Heart right ventricle (tissue), 16 donors: ENCODE measurements at regions of chr1 and their contacts with region 1.

Region 1: GRCh38 chr1:99326215-99326949 is 62.1 kb downstream of the PLPPR4 start:
- DNase-seq: no peak
- ATAC-seq: no peak
- H3K4me3 ChIP-seq: no peak overlapping the region
- H3K27ac ChIP-seq: no peak overlapping the region
- H3K4me1 ChIP-seq: peaks cover 0 to 4% (median 0%) of the 10 kb centered on the region in 9 donors
- H3K27me3 ChIP-seq: no peaks in the 10 kb centered on the region
- CTCF ChIP-seq: peak in 7 of 9 donors; percentile 31 to 53 (median 34)

Region 2: GRCh38 chr1:99277066-99277465 is 49.3 kb before region 1 on chr1:
- intact Hi-C with region 1: loop called in 1 of 10 experiments (anchors 2 kb)
- DNase-seq: no peak
- ATAC-seq: no peak
- H3K4me3 ChIP-seq: no peak overlapping the region
- H3K27ac ChIP-seq: no peak overlapping the region
- H3K4me1 ChIP-seq: peaks cover 0 to 8% (median 0%) of the 10 kb centered on the region in 9 donors
- H3K27me3 ChIP-seq: no peaks in the 10 kb centered on the region
- CTCF ChIP-seq: no peak

Region 3: DNA sequence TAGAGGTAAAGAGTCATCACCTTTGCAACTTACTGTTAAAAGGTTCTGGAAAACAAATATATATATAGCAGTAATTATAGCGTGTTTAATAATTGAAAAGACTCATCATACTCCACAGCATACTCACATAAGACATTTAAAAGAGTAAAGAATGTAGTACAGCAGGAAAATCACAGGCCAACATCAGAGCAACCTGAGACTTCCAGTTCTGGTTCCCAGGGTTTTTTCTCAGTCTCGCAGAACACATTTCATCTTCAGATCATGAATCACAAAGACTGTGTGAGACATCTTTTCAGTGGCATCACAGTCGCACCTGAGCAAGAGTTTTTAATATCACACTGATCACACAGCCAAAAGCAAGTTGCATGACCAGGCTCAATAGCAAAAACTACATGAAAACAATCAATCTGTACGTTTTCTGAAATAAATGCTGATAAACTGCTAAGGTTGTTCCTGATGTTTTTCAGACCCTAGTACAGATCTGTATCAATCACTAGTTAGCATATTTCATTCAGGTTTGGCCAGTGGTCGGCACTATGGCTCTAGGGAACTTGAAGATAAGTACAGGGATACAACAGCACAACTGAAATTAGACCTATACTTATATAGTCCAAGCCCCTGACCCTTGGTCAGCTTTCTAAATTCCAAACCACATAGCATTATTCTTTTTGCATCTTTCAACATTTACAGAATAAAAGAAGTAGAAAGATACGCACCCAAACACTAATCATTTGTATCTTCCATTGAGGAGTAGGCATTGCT is 80.5 kb after region 1 on chr1:
- intact Hi-C with region 1: no loop called
- DNase-seq: no peak
- ATAC-seq: no peak
- H3K4me3 ChIP-seq: no peak overlapping the region
- H3K27ac ChIP-seq: no peak overlapping the region
- H3K4me1 ChIP-seq: no peaks in the 10 kb centered on the region
- H3K27me3 ChIP-seq: no peaks in the 10 kb centered on the region
- CTCF ChIP-seq: no peak

Region 4: DNA sequence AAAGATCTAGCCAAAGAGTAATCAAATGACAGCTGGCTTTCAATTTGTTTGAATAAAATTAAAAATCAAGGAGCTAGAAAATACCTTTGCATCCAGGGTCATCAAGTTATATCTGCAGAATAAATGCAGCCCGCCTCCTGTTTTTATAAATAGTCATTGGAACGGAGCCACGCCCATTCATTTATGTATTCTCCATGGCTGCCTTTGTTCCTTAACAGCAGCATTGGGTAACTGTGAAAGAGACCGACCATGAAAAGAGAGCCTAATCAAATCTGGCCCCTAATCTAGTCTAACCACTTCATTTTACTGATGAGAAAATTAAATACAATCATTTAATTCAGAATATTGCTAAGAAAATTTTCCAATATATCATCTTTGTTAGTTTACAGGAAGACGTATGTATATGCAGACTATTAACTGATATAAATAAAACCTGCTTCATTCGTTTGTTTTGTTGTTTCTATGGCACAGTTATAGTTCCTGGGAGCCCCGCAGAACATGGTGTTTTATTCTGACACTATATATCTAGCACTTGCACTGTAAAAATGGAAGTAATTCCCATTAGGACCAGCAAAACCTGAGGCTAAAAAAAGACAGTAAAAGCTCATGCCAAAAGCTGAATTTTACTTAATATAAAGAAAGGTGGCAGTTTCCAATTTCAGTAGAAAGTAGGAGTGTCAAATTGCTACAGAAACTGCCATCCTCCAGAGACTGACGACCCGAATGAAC is 207.7 kb after region 1 on chr1:
- intact Hi-C with region 1: no loop called
- DNase-seq: peak in 1 of 2 donors; percentile 22
- ATAC-seq: peak in 6 of 8 donors; percentile 39 to 77 (median 67)
- H3K4me3 ChIP-seq: peak overlapping the region in 5 of 10 donors; percentile 3 to 33 (median 6)
- H3K27ac ChIP-seq: peak overlapping the region in 9 of 10 donors; percentile 3 to 83 (median 63)
- H3K4me1 ChIP-seq: peaks cover 0 to 41% (median 19%) of the 10 kb centered on the region in 9 donors
- H3K27me3 ChIP-seq: no peaks in the 10 kb centered on the region
- CTCF ChIP-seq: no peak